Head of caudate nucleus (tissue), 42 donors: ENCODE measurements at regions of chr19 and their contacts with region 1.

Region 1: GRCh38 chr19:14073261-14073924 is 807 bp downstream of the MISP3 start:
- DNase-seq: peak; percentile 35 to 88 (median 76)

Region 2: GRCh38 chr19:13880059-13881043 is 193.0 kb before region 1 on chr19:
- intact Hi-C with region 1: loop called (anchors 5 kb)
- DNase-seq: peak; percentile 95 to 99 (median 98)

Region 3: GRCh38 chr19:13905938-13906904 is 167.2 kb before region 1 on chr19 and contains the starts of genes BRME1 and CC2D1A:
- intact Hi-C with region 1: no loop called
- DNase-seq: peak; percentile 87 to 98 (median 96)

Region 4: GRCh38 chr19:13942023-13942684 is 131.2 kb before region 1 on chr19:
- intact Hi-C with region 1: no loop called
- DNase-seq: no peak

Region 5: DNA sequence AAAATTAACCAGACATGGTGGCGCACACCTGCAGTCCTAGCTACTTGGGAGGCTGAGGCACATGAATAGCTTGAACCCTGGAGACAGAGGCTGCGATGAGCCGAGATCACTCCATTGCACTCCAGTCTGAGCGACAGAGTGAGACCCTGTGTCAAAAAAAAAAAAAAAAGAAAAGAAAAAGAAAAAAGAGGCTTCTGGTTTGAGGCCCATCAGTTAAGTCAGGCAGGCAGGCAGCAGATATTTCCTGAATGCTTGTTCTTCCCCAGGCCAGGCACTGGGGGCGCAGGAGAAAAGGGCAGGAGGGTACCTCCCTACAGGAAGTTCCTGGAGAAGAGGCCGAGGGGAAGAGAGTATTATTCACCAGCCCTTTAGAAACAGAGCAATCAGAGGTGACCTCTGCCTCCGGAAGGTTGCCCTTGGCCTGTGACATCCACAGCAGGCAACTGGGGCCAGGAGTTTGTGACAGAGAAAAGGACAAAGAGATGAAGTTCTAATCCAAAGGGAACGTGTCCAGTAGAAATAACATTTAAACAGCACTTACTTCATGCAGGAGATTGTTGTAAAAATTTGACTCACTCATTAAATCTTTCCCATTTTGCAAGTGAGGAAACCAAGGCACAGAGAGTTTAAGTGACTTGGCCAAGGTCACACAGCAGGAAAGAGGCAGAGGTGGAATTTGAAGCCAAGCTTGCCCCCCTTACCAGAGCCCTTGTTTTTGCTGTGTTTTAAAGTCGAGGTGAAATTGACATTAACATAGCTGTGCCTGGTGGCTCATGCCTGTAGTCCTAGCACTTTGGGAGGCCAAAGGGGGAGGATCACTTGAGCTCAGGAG is 49.8 kb before region 1 on chr19:
- intact Hi-C with region 1: no loop called
- DNase-seq: peak in 4 of 42 donors; percentile 9 to 39 (median 29)

Region 6: DNA sequence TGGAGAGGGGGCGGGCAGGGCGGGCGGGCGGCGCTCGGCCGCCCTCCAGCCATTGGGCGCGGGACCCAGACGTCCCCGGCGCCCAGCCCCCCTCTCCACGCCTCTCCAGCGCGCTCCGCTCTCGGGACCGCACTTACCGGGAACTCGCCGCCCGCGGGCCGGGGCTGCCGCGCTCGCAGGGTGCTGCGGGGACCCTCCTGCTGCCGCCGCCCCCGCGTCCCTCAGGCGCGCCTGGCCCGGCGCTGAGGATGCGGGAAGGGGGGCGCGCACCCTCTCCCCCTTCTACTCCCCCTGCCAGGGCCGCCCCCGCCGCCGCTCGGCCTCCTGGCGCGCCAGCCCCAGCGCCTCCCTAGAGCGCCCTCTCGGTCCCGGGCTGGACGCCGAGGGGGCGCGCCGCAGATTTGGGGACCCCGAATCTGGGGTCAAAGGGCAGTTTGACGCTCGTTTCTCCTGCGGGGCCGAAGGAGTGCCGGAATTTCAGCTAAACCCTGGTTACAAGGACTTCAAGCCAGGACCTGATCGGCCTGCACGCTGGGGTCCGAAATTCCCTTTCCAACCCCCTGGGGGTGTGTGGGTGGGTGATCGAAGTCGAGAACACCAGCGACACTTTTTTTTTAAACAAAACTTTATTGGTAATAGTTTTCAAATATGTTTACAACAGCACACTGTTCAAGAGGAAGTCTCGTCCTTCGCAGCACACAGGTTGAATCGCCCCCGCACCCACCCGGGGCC is 17.9 kb after region 1 on chr19:
- intact Hi-C with region 1: no loop called
- DNase-seq: peak in 19 of 42 donors; percentile 35 to 85 (median 73)